Prostate gland (tissue), 2 donors: ENCODE measurements at regions of chr17 and their contacts with region 1.

Region 1: DNA sequence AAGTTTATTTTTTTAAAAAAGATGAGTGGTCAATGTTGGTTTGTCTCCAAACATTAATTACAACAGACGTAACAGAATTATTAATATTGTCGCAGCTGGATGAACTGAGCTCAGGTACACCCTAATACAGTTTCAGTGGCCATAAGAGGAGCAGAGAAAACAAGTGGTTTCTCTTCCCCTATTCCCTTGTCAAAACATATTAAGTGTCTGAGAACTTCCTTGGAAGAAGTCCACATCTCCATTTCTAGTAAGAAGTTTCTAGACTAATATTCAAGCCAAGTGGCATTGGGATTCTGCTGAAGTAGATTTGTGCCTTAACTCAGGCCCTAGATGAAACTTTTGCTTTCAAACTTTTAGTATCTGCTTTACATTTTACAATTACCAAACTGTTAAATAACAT is 47.7 kb downstream of the GNA13 start:
- DNase-seq: no peak
- H3K4me3 ChIP-seq: no peak overlapping the region
- H3K27ac ChIP-seq: peak overlapping the region in 1 of 2 donors; percentile 4
- H3K4me1 ChIP-seq: peaks cover 8% of the 10 kb centered on the region
- H3K27me3 ChIP-seq: no peaks in the 10 kb centered on the region
- CTCF ChIP-seq: no peak
- POLR2A ChIP-seq: no peak

Region 2: DNA sequence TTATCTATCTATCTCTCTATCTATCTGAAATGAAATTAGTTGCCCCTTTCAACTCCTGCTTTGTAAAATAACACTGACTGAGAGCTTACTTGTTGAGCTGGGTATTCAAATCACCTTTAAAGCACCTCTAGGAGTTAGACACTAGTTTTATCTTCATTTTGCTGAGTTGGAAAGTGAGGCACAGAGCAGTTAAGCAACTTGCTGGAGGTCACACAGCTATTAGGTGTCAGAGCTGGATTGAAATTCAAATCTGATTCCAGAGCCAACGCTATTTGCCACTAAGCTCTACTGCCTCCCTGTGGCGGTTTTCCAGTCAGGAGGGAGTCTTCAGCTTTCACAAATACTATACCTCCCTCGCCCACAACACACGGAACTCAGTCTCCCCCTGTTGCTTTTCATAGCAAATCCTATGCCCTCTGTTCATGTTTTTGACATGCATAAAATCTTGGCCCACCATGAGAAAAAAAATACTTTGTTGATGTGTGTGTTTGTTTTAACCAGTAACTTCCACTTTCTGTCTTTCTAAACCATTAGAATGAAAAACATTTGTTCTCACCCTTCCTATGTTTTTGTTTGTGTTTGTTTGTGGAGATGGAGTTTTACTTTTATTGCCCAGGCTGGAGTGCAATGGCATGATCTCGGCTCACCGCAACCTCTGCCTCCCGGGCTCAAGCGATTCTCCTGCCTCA is 271.9 kb before region 1 on chr17:
- intact Hi-C with region 1: no loop called
- DNase-seq: peak; percentile 7
- H3K4me3 ChIP-seq: no peak overlapping the region
- H3K27ac ChIP-seq: no peak overlapping the region
- H3K4me1 ChIP-seq: no peaks in the 10 kb centered on the region
- H3K27me3 ChIP-seq: no peaks in the 10 kb centered on the region
- CTCF ChIP-seq: peak in 3 of 4 experiments; percentile 40 to 51 (median 47)
- POLR2A ChIP-seq: no peak

Region 3: DNA sequence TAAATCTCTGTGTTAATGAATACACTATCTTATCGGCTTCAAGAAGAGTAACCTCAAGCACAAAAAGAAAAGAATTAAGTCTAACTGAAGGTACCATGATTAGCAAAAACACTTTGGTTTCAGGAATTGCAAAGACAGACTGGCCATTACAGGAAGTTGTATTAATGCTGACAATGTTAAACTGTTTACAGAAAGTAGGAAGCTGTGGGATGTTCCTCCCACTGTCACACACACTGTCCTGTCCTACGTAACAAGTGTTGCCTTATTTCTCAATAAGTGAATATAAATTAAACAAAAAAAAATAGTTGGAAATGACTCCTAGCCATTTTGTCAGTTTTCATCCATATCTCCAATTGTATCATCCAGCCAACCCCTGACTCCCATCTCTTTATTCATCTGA is 39.1 kb after region 1 on chr17:
- intact Hi-C with region 1: loop called (anchors 5 kb)
- DNase-seq: no peak
- H3K4me3 ChIP-seq: no peak overlapping the region
- H3K27ac ChIP-seq: peak overlapping the region; percentile 25 to 31
- H3K4me1 ChIP-seq: no peaks in the 10 kb centered on the region
- H3K27me3 ChIP-seq: no peaks in the 10 kb centered on the region
- CTCF ChIP-seq: no peak
- POLR2A ChIP-seq: no peak